Activated B cell treated with CpG ODN at 0.5 μM for 24 hours (primary cell): ENCODE measurements at regions of chr1 and their contacts with region 1.

Region 1: DNA sequence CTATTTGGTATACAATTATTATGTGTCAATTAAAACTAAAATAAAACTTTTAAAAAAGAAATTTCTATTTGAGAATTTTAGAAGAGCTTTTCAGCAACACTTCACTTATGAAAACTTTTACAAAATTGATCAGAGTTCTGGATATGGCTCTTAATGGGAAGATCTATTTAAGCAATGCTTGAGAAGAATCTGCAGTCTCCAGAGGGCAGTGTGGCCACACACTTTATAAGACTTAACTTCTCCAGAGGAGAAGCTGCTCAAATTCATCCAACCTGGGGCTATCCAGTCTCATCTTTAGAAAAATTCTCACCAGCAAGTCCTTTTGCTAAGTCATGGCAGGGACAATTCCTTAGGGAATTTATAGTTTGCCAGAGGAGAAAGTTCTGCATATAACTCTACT is 25.2 kb upstream of the AGO1 start:
- DNase-seq: no peak
- ATAC-seq: no peak
- H3K4me3 Mint-ChIP-seq: no peak overlapping the region
- H3K27ac Mint-ChIP-seq: no peak overlapping the region
- H3K4me1 Mint-ChIP-seq: no peaks in the 10 kb centered on the region
- H3K27me3 Mint-ChIP-seq: no peaks in the 10 kb centered on the region
- CTCF ChIP-seq: no peak

Region 2: GRCh38 chr1:36088575-36089443 is 231.0 kb after region 1 on chr1 and contains the start of gene ADPRS:
- CTCF ChIA-PET with region 1: no interaction called
- POLR2A ChIA-PET with region 1: no interaction called
- intact Hi-C with region 1: loop called (anchors 10 kb)
- DNase-seq: peak; percentile 90
- ATAC-seq: peak; percentile 85
- H3K4me3 Mint-ChIP-seq: peak within 1 kb of the TSS; percentile 89
- H3K27ac Mint-ChIP-seq: peak within 1 kb of the TSS; percentile 88
- H3K4me1 Mint-ChIP-seq: peaks cover 17% of the 10 kb centered on the region
- H3K27me3 Mint-ChIP-seq: peaks cover 18% of the 10 kb centered on the region
- CTCF ChIP-seq: no peak
- total RNA-seq, gene ADPRS: 23.0 and 23.9 TPM in 2 replicates

Region 3: GRCh38 chr1:36134505-36135329 is 276.9 kb after region 1 on chr1:
- CTCF ChIA-PET with region 1: no interaction called
- POLR2A ChIA-PET with region 1: no interaction called
- intact Hi-C with region 1: loop called (anchors 5 kb)
- DNase-seq: no peak
- ATAC-seq: peak; percentile 67
- H3K4me3 Mint-ChIP-seq: no peak overlapping the region
- H3K27ac Mint-ChIP-seq: no peak overlapping the region
- H3K4me1 Mint-ChIP-seq: no peaks in the 10 kb centered on the region
- H3K27me3 Mint-ChIP-seq: no peaks in the 10 kb centered on the region
- CTCF ChIP-seq: no peak